ENCODE measurements at regions of chr1 and their contacts with region 1.

Region 1: DNA sequence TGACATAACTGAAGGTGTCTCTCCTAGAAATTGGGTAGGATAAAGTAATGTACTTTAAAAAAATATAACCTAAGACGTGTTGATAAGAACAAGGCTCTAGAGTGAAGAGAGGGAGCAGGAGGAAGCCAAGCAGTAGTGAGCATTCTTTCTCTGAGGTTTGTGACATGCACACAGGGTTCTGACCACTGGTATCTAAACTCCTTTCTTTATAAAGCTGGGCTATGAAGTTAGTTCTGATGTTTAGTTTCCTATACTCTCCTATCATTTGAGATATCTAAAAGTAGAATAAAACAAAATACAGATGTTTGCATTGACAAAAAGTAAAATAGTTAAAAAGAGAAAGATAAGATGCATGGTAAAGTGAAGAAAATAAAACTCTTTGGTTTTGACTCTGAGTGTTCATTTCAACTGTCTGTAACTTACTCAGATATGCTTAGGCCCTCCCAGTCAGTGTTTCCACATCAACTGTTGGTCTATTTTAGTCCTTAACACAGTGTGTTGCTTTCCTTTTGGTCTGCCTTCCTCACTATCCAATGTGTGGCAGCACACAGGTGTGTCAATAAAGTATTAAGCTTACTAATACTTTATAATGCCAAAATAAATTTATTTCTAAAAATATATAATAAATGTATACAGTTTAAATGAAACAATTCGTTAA is 543.5 kb downstream of the PTPRC start:
- DNase-seq: no peak
- H3K4me3 Mint-ChIP-seq: no peak overlapping the region
- H3K27ac Mint-ChIP-seq: no peak overlapping the region
- H3K4me1 Mint-ChIP-seq: peaks cover 10% of the 10 kb centered on the region
- H3K27me3 Mint-ChIP-seq: no peaks in the 10 kb centered on the region

Region 2: GRCh38 chr1:199202331-199202730 is 20.0 kb after region 1 on chr1:
- CTCF ChIA-PET with region 1: no interaction called
- intact Hi-C with region 1: loop called (anchors 2 kb)
- DNase-seq: no peak
- H3K4me3 Mint-ChIP-seq: no peak overlapping the region
- H3K27ac Mint-ChIP-seq: no peak overlapping the region
- H3K4me1 Mint-ChIP-seq: no peaks in the 10 kb centered on the region
- H3K27me3 Mint-ChIP-seq: no peaks in the 10 kb centered on the region